Gastrocnemius medialis (tissue), 4 donors: ENCODE measurements at regions of chr9 and their contacts with region 1.

Region 1: GRCh38 chr9:75539523-75539922 is 350.9 kb upstream of the PCSK5 start:
- DNase-seq: no peak
- ATAC-seq: no peak
- H3K4me3 ChIP-seq: no peak overlapping the region
- H3K27ac ChIP-seq: no peak overlapping the region
- H3K4me1 ChIP-seq: no peaks in the 10 kb centered on the region
- H3K27me3 ChIP-seq: no peaks in the 10 kb centered on the region
- CTCF ChIP-seq: no peak
- POLR2A ChIP-seq: no peak

Region 2: GRCh38 chr9:75429531-75430475 is 109.7 kb before region 1 on chr9:
- in situ Hi-C with region 1: no loop called
- intact Hi-C with region 1: no loop called
- DNase-seq: no peak
- ATAC-seq: peak; percentile 13 to 15
- H3K4me3 ChIP-seq: no peak overlapping the region
- H3K27ac ChIP-seq: peak overlapping the region; percentile 8 to 73 (median 31)
- H3K4me1 ChIP-seq: peaks cover 0 to 3% of the 10 kb centered on the region in 2 donors
- H3K27me3 ChIP-seq: no peaks in the 10 kb centered on the region
- CTCF ChIP-seq: no peak
- POLR2A ChIP-seq: no peak

Region 3: DNA sequence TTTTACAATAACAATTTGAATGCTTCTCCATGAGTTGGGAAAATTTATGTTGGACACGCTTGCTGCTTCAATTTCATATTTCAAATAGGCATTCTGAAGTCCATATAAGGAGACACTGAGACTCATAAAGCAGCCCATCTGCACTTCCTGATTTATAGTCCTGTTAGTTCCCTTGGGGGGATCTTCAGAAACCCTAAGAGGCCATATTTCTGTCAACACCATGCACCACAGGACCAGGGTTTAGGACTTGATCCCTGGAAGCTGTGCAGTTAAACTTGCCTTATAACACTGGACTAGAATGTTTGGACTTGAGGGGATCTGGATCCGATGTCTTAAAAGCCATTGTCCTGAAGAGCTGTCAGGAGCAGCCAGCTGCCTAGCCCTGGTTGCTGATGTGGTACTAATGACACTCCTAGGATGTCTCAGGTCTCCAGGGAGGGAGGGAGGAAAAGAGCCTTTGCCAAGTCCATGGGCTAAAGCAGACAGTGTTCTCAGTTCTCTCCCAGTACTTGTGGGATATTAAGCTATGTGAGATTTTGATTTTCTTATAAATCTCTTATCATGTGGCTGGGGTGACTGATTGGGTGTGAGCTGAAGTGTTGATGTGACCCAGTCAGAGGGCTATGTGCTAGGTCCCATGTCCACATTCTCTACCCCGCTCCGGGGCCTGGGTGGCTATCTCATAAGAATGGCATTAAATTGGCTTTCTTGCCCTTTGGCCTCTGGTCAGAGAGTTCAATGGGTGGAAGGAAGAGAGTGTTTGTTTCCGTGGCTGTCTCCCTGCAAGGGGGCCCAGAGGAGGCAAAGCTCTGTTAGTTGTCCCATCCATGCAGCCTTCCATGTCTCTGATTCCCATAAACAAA is 51.4 kb before region 1 on chr9:
- in situ Hi-C with region 1: no loop called
- intact Hi-C with region 1: no loop called
- DNase-seq: peak in 1 of 2 donors; percentile 18
- ATAC-seq: peak; percentile 45 to 58
- H3K4me3 ChIP-seq: no peak overlapping the region
- H3K27ac ChIP-seq: peak overlapping the region in 2 of 4 donors; percentile 6 to 39
- H3K4me1 ChIP-seq: no peaks in the 10 kb centered on the region
- H3K27me3 ChIP-seq: no peaks in the 10 kb centered on the region
- CTCF ChIP-seq: no peak
- POLR2A ChIP-seq: no peak

Region 4: DNA sequence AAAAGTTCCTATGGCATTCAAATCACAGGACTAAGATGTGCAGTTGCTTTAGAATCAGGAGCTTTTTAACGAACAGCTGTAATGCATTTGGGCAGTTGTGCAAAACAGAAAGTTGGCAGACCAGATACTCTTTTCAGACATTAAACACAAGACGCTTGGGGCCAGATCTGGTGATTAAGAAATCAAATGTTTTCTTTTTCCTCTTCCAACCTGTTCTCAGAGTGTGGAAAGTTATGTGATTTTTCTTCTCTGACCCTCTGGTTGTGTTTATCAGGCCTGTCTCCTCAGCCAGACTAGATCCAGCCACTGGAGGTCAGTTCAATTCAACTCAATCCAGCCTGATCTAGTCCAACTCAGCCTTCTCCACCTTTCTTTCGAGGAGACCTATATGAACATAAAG is 52.4 kb after region 1 on chr9:
- in situ Hi-C with region 1: loop called in 1 of 4 experiments (anchors 10 kb)
- intact Hi-C with region 1: no loop called
- DNase-seq: peak; percentile 8 to 13
- ATAC-seq: peak; percentile 51 to 68
- H3K4me3 ChIP-seq: no peak overlapping the region
- H3K27ac ChIP-seq: peak overlapping the region in 2 of 4 donors; percentile 29 to 36
- H3K4me1 ChIP-seq: no peaks in the 10 kb centered on the region
- H3K27me3 ChIP-seq: no peaks in the 10 kb centered on the region
- CTCF ChIP-seq: no peak
- POLR2A ChIP-seq: no peak